ENCODE measurements at regions of chr17 and their contacts with region 1.

Region 1: GRCh38 chr17:44533533-44534246 is 23.6 kb upstream of the FZD2 start:
- DNase-seq: peak; percentile 91
- H3K4me3 ChIP-seq: peak overlapping the region; percentile 45
- H3K27ac ChIP-seq: peak overlapping the region; percentile 42
- H3K4me1 ChIP-seq: peaks cover 20% of the 10 kb centered on the region; the same call in 1 of the 2 replicates
- H3K27me3 ChIP-seq: no peaks in the 10 kb centered on the region

Region 2: DNA sequence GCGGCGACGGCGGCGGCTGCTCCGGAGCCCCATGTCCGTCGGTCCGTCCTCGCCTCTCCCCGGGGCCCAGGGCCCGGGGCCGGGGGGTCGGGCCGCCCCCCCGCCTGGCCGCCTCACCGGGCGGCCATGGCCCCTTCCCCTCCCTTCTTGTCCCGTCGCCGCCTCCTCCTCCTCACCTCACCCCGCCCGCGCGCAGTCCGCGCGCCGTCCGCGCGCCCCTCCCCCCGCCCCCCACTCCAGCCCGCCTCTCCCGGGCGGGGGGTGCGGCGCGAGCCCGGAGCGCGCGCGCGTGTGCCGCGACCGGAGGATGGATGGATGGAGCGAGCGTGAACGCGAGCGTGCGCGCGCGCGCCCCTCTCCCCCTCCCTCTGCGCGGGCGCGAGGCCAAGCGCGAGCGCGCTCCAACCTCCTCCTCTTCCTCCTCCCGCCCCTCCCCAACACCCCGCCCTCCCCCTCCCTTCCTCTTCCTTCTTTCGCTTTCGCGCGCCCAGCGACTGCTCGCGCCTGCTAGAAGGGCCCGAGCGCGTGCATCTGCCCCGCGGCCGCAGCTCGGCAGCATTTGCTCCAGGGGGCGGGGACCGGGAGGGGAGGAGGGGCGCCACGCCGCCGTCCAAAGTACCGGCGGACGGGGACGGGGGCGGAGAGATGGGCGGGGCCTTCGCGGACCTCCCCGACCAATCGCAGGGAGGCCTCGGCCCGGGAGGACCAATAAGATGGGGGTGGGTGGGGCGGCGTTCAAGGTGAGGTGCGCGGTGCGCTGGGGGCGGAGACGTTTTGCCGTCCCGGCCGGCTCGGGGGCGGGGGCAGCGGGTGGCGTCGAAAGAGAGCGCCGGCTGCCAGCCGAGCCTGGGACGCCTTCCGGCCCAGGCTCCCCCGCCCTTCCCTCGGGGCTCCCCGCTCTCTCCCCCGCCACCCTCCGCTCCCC is 333.9 kb before region 1 on chr17 and contains the start of gene ATXN7L3:
- in situ Hi-C with region 1: loop called (anchors 25 kb)
- DNase-seq: peak; percentile 100
- H3K4me3 ChIP-seq: peak within 1 kb of the TSS; percentile 89
- H3K27ac ChIP-seq: peak within 1 kb of the TSS; percentile 88
- H3K4me1 ChIP-seq: peaks cover 24% of the 10 kb centered on the region
- H3K27me3 ChIP-seq: no peaks in the 10 kb centered on the region
- total RNA-seq, gene ATXN7L3: 48.2 and 60.4 TPM in 2 replicates

Region 3: DNA sequence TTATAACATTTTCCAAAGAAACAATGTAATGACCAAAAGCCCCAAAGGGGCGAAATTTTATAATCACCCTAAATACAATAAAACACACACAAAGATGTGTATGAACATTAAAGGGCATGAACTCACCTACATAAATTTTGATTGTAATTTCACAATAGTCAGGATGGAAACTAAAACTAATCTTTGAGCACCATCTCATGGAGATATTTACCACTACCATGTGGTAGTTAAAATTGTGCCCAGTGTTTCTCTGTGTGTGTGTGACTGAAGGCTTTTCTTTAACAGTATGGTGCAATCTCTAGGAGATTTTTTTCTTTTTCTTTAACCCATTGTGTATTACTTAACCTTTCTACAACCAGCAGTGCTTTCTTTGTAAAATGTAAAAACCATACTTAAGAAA is 102.9 kb after region 1 on chr17:
- in situ Hi-C with region 1: loop called (anchors 10 kb)
- DNase-seq: peak; percentile 75
- H3K4me3 ChIP-seq: no peak overlapping the region
- H3K27ac ChIP-seq: no peak overlapping the region
- H3K4me1 ChIP-seq: no peaks in the 10 kb centered on the region
- H3K27me3 ChIP-seq: no peaks in the 10 kb centered on the region

Region 4: DNA sequence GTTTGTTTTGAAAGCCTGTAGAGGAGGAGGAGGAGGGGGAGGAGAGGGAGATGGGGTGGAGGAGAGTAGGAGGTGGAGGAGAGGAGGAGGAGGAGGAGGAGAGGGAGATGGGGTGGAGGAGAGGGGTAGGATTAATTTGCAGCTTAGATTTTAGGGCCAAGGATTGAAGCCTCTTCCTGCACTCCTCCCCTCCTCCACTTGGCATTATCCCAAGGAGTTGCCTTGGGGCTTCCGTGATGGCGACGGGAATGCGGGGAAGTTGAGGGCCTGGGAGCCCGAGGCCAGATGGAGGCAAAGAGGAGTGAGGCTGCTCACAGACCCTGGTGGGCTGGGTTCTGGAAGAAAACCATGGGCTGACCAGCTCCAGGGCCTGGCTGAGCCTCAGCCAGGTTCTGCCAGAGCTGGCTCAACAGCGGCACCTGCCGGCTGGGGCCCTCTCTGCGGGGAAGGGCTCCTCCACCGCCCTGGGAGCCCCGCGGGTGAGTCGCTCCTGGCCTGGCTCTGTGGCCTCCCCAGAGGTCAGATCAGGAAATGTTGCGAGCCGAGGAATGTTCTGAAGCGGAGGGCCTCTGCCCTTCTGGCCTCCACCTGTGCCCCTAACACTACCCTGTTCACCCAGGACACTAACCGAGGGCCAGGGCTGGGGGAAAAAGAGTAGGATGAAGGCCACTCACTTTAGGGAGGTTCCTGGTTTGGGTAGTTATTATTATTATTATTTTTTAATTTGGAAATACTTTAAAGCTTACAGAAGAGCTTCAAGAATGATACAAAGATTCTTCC is 664.1 kb after region 1 on chr17:
- in situ Hi-C with region 1: no loop called
- DNase-seq: peak; percentile 93
- H3K4me3 ChIP-seq: no peak overlapping the region
- H3K27ac ChIP-seq: no peak overlapping the region
- H3K4me1 ChIP-seq: peaks cover 5% of the 10 kb centered on the region; the same call in 1 of the 2 replicates
- H3K27me3 ChIP-seq: no peaks in the 10 kb centered on the region

Measured in GM23248 (cell line).